ENCODE measurements at regions of chr3 and their contacts with region 1.

Region 1: GRCh38 chr3:182713743-182714517 is 79.4 kb upstream of the ATP11B start:
- DNase-seq: peak; percentile 53
- CTCF ChIP-seq: peak; percentile 75

Region 2: DNA sequence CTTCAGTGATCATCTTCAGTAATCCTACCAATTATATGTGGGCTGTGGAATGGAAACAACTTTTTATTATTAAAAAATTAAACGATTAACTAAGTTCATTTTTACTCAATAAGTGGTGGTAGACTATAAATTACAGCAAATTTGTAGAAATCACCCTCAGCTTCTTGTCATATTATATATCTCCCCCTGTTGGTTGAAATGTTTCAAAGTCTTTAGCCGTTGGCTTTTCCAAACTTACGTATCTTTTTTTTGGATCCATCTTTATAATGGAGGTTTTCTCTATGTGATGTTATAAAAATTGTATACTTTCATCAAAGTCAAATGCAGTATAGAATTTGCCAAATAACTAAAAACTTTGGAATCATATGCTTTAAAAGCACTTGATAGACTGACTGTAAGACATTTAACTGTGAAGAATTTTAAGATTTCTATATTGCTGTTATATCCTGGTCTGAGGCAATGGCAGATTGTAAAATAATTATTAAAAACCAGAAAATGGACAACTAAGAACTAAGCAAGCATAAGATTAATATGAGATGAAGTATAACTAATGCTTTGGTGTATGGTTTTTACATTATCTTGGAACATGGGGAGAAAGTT is 124.0 kb after region 1 on chr3:
- in situ Hi-C with region 1: loop called (anchors 25 kb)
- DNase-seq: no peak
- CTCF ChIP-seq: peak; percentile 31

Measured in GM13977 (cell line).